Body of pancreas (tissue), 4 donors: ENCODE measurements at regions of chr22 and their contacts with region 1.

Region 1: GRCh38 chr22:43826142-43827002 is 14.3 kb upstream of the EFCAB6 start:
- DNase-seq: peak; percentile 46 to 66 (median 56)
- ATAC-seq: no peak
- H3K4me3 ChIP-seq: no peak overlapping the region
- H3K27ac ChIP-seq: no peak overlapping the region
- H3K4me1 ChIP-seq: peaks cover 16% of the 10 kb centered on the region
- H3K27me3 ChIP-seq: no peaks in the 10 kb centered on the region
- CTCF ChIP-seq: peak in 6 of 7 experiments; percentile 32 to 66 (median 50)
- POLR2A ChIP-seq: no peak

Region 2: GRCh38 chr22:43393132-43393843 is 433.1 kb before region 1 on chr22:
- intact Hi-C with region 1: loop called (anchors 5 kb)
- DNase-seq: no peak
- ATAC-seq: no peak
- H3K4me3 ChIP-seq: no peak overlapping the region
- H3K27ac ChIP-seq: no peak overlapping the region
- H3K4me1 ChIP-seq: peaks cover 3% of the 10 kb centered on the region
- H3K27me3 ChIP-seq: peaks cover 0 to 2% of the 10 kb centered on the region in 2 donors
- CTCF ChIP-seq: no peak
- POLR2A ChIP-seq: no peak